Sigmoid colon (tissue), 7 donors: ENCODE measurements at regions of chr6 and their contacts with region 1.

Region 1: DNA sequence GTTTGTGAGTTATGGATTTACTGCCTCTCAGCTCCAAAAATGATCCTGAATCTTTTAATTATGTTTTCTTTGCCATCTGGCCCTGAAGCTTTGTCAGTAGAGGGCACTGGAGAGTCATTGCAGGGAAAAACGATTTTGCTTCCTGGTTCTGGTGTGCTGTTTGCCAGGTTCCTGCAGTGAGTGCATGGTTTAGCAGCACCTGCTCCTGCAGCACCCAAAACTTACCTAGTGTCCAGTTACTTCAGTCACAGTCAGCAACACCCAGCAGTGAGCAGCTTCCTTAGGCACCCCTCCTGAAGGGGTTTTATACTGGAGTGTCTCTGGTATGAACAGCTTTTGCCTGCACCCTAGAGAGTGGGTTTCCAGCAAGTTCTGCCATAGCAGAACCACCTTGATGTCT is 6.0 kb upstream of the TRIM26 start:
- DNase-seq: no peak
- H3K4me3 ChIP-seq: no peak overlapping the region
- H3K27ac ChIP-seq: no peak overlapping the region
- H3K4me1 ChIP-seq: peaks cover 0 to 9% (median 7%) of the 10 kb centered on the region in 4 donors
- H3K27me3 ChIP-seq: no peaks in the 10 kb centered on the region
- CTCF ChIP-seq: peak in 3 of 4 experiments; percentile 35 to 77 (median 56)
- EP300 ChIP-seq: no peak
- POLR2A ChIP-seq: no peak

Region 2: GRCh38 chr6:30272017-30272416 is 52.8 kb after region 1 on chr6:
- intact Hi-C with region 1: no loop called
- DNase-seq: no peak
- H3K4me3 ChIP-seq: no peak overlapping the region
- H3K27ac ChIP-seq: no peak overlapping the region
- H3K4me1 ChIP-seq: no peaks in the 10 kb centered on the region
- H3K27me3 ChIP-seq: no peaks in the 10 kb centered on the region
- CTCF ChIP-seq: no peak
- EP300 ChIP-seq: no peak
- POLR2A ChIP-seq: no peak

Region 3: GRCh38 chr6:30396833-30397479 is 177.7 kb after region 1 on chr6:
- intact Hi-C with region 1: loop called (anchors 2 kb)
- DNase-seq: peak; percentile 86
- H3K4me3 ChIP-seq: no peak overlapping the region
- H3K27ac ChIP-seq: no peak overlapping the region
- H3K4me1 ChIP-seq: peaks cover 0 to 8% (median 2%) of the 10 kb centered on the region in 4 donors
- H3K27me3 ChIP-seq: no peaks in the 10 kb centered on the region
- CTCF ChIP-seq: peak; percentile 67 to 84 (median 74)
- EP300 ChIP-seq: no peak
- POLR2A ChIP-seq: no peak